WTC11 (cell line): ENCODE measurements at regions of chr3 and their contacts with region 1.

Region 1: DNA sequence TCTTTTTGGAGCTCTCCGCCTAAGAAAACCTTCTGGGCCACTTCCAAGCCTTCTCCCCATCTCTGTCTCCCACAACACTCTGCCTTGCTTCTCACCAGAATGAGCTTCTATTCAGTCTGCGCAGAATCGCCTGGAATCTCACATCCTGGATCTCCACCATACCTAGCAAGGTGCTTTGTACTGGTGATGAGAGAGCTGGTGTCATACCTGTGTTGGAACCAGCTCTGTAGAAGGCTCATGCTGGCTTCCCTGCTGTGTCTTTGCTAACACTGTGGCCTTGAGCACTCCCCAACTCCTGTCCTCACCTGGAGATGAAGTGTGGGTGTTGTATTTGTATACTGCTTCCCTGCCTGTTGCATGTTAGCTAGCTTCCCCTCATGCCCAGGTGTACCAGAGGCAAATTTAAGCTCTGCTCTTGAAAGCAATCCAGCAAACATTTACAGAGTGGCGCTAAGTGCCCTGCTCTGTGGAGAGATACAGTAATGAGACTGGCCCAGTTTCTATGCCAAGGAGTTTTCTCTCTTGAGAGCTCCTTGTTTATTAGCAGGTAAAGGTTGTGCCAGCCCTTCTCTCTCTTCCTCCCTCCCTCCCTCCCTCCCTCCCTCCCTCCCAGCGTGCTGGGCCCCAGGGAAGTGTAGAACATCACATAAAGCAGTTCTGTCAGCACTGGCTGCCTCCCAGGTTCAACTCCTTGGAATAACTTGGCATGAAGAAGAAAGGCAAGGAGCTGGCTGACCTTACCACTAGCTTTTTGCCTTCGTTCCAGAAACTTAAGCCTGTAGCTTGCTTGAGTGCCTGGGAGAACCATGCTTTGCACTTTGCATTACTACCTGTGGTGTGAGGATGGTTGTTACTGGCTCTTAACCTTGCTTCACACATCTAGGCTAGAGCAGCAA is 54.9 kb downstream of the TRIM71 start:
- DNase-seq: no peak
- ATAC-seq: no peak
- H3K4me3 Mint-ChIP-seq: peak overlapping the region; percentile 62
- H3K27ac Mint-ChIP-seq: peak overlapping the region; percentile 100
- H3K4me1 Mint-ChIP-seq: peaks cover 92% of the 10 kb centered on the region
- H3K27me3 Mint-ChIP-seq: no peaks in the 10 kb centered on the region
- CTCF ChIP-seq: no peak

Region 2: GRCh38 chr3:32835961-32836360 is 36.8 kb before region 1 on chr3:
- CTCF ChIA-PET with region 1: interaction called, 6 read pairs
- POLR2A ChIA-PET with region 1: interaction called, 12 read pairs
- DNase-seq: peak; percentile 63
- ATAC-seq: peak; percentile 71
- H3K4me3 Mint-ChIP-seq: peak overlapping the region; percentile 56
- H3K27ac Mint-ChIP-seq: peak overlapping the region; percentile 98
- H3K4me1 Mint-ChIP-seq: peaks cover 93% of the 10 kb centered on the region
- H3K27me3 Mint-ChIP-seq: no peaks in the 10 kb centered on the region
- CTCF ChIP-seq: no peak

Region 3: DNA sequence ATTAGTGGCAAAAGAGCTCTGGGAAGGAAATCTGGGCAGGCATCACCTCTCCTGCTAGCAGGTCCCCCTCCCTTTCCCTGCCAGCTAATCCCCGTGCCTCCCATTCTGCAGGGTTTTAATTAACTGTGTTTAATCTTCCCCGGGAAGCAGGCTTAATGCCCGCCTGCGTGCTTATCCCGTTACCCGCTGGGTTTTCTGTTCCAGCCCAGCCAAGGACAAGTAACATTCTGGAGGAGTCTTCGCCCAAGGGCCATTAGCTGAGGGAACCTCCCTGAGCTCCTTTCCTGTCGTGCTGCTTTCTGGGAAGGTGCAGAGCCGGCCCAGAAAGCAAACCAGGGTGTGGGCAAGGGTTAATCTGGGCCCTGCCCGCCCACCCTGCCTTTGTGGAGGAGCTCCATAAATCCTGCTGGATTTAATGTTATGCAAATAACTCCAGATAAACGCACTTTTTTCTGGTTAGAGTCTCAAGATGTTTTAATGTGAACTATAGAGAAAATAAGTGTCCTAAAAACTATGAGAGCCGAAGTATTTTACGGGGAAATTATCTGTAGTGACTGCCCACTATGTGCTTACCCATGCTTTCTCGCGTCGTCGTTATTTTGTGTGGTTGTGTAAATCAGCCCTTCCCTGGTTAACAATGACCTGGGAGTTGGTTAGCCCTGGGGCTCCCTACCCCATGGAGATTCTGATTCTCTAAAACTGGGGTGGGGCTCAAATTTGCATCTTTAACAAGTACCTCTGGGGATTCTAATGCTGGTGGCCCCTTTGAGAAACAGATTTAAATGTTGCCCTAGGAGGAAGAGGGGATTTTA is 29.0 kb before region 1 on chr3:
- CTCF ChIA-PET with region 1: interaction called, 7 read pairs
- POLR2A ChIA-PET with region 1: interaction called, 13 read pairs
- DNase-seq: peak; percentile 65
- ATAC-seq: peak; percentile 39
- H3K4me3 Mint-ChIP-seq: peak overlapping the region; percentile 71
- H3K27ac Mint-ChIP-seq: peak overlapping the region; percentile 98
- H3K4me1 Mint-ChIP-seq: peaks cover 99% of the 10 kb centered on the region
- H3K27me3 Mint-ChIP-seq: no peaks in the 10 kb centered on the region
- CTCF ChIP-seq: no peak

Region 4: GRCh38 chr3:32901432-32902409 is 29.0 kb after region 1 on chr3:
- CTCF ChIA-PET with region 1: interaction called, 11 read pairs
- POLR2A ChIA-PET with region 1: no interaction called
- DNase-seq: peak; percentile 57
- ATAC-seq: peak; percentile 13
- H3K4me3 Mint-ChIP-seq: peak overlapping the region; percentile 29; the same call in 1 of the 2 replicates
- H3K27ac Mint-ChIP-seq: peak overlapping the region; percentile 23
- H3K4me1 Mint-ChIP-seq: peaks cover 28% of the 10 kb centered on the region
- H3K27me3 Mint-ChIP-seq: no peaks in the 10 kb centered on the region
- CTCF ChIP-seq: no peak